ENCODE measurements at regions of chr14 and their contacts with region 1.

Region 1: DNA sequence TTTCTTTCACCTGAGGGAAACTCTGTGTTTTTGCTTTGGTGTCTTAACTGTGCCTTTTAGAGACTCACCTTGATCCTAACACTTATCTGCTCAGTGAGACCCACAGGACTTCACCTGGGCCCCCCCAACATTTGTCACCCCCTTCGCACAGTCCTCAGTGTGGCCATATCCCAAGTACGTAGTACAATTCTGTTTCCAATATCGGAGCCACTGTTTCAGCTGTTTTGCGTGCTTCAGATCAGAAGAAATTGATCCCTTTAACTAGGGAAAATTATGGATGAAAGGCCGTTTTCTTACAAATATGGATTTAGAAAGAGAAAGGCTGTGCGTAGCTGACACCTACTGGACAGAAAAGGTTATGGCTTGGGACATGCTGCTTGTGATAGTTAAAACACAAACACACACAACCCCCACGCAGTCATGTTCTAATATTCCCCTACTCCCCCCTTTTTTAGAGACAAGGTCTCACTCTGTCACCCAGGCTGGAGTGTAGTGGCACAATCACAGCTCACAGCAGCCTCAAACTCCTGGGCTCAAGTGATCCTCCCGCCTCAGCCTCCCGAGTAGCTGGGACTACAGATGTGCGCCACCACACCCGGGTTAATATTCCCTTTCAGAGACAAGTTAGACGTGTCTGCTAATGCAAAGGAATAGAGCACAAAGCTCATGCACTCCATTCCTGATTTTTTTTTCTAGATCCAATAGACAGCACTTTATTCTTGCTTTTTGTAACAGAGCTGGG is 3.6 kb upstream of the SLC7A8 start:
- DNase-seq: no peak

Region 2: GRCh38 chr14:23120541-23121251 is 66.4 kb before region 1 on chr14:
- intact Hi-C with region 1: loop called (anchors 1 kb)
- DNase-seq: peak; percentile 96

Region 3: DNA sequence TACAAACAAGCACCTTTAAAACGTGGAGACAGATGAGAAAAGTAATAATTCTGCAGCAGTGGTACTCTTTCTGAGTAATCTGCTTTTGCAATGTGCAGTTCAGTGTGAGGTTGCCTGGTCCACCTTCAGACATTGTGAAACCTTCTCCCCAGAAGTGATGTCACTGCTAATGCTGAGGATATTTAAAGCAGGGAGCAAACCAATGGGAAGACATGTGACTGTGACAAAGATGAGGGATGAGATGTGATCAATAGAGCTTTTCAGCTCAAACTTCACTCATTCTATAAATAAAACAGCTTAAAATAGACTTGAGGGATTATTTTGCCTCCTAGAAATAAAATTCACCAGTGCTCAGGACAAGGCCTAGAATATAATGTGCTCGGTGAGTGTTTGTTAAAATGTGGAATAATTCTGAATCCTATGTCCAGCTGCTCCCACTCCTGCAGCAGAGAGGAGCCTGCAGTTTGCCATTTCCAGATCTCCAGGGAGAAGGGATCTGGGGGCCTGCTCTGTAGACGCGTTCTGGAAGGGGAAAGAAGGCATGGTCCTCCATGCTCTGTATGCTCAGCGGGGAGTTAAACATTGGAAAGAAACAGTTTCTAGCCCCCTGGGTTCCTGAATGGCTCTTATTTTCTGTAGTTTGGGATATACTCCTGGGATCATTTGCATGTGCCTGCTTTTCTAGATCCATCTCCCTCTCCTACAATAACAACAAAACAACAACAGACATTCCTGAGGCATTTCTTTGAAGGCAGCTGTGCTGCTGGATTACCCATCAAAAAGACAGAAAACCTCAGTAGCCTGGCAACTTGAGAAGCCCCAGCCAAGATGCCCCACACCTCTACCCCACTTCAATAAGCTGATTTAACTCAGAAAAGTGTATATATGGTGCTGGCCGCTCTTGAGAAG is 12.6 kb before region 1 on chr14:
- intact Hi-C with region 1: no loop called
- DNase-seq: no peak

Measured in cardiac septum (tissue), 1 donor.